Caco-2 (cell line): ENCODE measurements at regions of chr5 and their contacts with region 1.

Region 1: GRCh38 chr5:57416249-57416994 is 66.2 kb downstream of the ACTBL2 start:
- DNase-seq: peak in 1 of 2 experiments; percentile 42
- H3K4me3 ChIP-seq: no peak overlapping the region
- H3K4me3 Mint-ChIP-seq: no peak overlapping the region
- H3K27ac Mint-ChIP-seq: peak overlapping the region; percentile 81
- H3K4me1 ChIP-seq: peaks cover 30% of the 10 kb centered on the region
- H3K4me1 Mint-ChIP-seq: peaks cover 15% of the 10 kb centered on the region
- H3K27me3 ChIP-seq: no peaks in the 10 kb centered on the region
- H3K27me3 Mint-ChIP-seq: no peaks in the 10 kb centered on the region
- CTCF ChIP-seq: no peak

Region 2: GRCh38 chr5:57338068-57338892 is 78.1 kb before region 1 on chr5:
- CTCF ChIA-PET with region 1: no interaction called
- POLR2A ChIA-PET with region 1: no interaction called
- intact Hi-C with region 1: loop called (anchors 2 kb)
- DNase-seq: peak; percentile 54 to 58
- H3K4me3 ChIP-seq: no peak overlapping the region
- H3K4me3 Mint-ChIP-seq: peak overlapping the region; percentile 35
- H3K27ac Mint-ChIP-seq: peak overlapping the region; percentile 61
- H3K4me1 ChIP-seq: peaks cover 51% of the 10 kb centered on the region
- H3K4me1 Mint-ChIP-seq: peaks cover 17% of the 10 kb centered on the region
- H3K27me3 ChIP-seq: no peaks in the 10 kb centered on the region
- H3K27me3 Mint-ChIP-seq: no peaks in the 10 kb centered on the region
- CTCF ChIP-seq: peak; percentile 41 to 46